Activated naive CD4-positive, alpha-beta T cell treated with anti-CD3 and anti-CD28 coated beads for 36 hours (primary cell): ENCODE measurements at regions of chr1 and their contacts with region 1.

Region 1: DNA sequence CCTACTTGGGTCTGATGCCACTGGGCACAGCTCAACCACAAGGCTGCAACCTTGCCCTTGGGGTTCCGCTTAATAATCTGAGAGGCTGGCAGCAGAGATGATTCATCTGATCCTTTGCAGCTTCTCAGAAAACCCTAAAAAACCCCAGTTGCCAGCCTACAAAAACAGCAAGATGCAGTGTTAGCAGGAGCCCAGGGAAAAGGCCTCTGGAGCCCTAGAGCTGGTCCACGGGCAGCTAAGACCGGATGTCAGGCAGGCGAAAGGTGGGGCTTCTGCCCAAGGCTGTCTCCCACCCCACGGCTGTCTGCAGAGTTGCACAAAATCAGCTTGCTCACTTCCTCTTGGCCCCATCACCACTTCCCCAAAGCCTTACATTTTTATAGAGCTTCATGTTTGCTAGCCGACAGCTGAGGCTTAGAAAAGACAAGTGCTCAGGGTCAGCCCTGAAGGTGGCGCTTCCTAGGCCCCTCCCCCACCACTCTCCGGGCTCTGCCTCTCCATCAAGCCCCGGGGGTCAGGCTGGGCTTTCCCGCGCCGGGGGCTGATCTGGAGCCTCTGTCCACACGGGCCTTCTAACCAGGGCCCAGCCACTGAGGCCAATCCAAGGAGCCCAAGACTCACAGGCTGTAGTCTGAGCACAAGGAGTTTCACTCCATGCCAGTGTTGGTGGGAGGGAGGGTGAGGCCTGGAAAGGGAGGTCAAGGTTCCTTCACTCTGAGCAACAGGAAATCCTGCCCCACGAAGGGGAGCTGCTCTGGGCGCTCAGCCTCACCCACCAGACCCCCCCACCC is 4.2 kb upstream of the ADORA3 start:
- DNase-seq: peak; percentile 77
- H3K4me3 Mint-ChIP-seq: peak overlapping the region; percentile 53
- H3K27ac Mint-ChIP-seq: peak overlapping the region; percentile 92
- H3K4me1 Mint-ChIP-seq: peaks cover 49% of the 10 kb centered on the region
- H3K27me3 Mint-ChIP-seq: no peaks in the 10 kb centered on the region

Region 2: DNA sequence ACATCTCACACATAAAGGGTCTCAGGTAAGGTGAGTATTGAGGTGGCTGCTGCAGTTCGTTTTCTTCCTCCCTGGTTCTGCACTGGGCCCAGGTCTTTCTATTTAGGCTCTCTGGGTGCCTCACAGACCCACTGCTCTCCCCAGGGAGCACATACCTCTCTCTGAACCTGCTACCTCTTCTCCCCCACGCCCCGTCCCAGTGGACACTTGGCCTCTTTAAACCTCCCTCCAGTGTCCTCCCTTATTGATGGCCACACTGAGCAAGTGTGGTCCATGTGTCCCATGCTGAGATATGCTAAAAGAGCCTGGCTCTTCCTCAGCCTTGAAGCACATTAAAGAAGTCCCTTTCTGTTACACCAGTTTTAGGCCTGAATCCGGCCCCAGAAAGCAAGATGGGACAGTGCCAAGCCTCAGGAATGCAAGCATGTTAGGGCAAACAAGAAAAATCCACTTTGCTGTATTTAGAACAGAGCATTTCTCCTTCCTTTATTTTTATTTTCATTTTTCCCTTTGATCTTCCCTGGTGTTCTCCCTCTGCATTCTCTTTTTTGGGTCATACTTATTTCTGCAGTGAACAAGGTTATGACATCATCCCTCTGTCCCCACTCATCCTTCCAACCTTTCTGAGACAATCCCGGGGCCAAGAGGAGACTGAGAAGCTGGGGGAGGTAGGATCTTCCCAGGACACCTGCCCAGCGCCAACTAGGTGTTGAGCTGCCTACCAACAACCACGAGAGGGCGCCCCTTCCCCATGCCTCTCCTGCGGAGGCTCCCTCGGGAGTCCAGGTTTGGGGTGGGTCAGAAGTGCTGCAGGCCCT is 285.1 kb before region 1 on chr1:
- CTCF ChIA-PET with region 1: no interaction called
- intact Hi-C with region 1: loop called (anchors 5 kb)
- DNase-seq: peak; percentile 90
- H3K4me3 Mint-ChIP-seq: peak overlapping the region; percentile 53
- H3K27ac Mint-ChIP-seq: peak overlapping the region; percentile 99
- H3K4me1 Mint-ChIP-seq: peaks cover 94% of the 10 kb centered on the region
- H3K27me3 Mint-ChIP-seq: no peaks in the 10 kb centered on the region

Region 3: GRCh38 chr1:111481387-111482221 is 26.0 kb before region 1 on chr1:
- CTCF ChIA-PET with region 1: interaction called, 41 read pairs
- intact Hi-C with region 1: loop called (anchors 1 kb)
- DNase-seq: peak; percentile 87
- H3K4me3 Mint-ChIP-seq: no peak overlapping the region
- H3K27ac Mint-ChIP-seq: no peak overlapping the region
- H3K4me1 Mint-ChIP-seq: peaks cover 29% of the 10 kb centered on the region
- H3K27me3 Mint-ChIP-seq: no peaks in the 10 kb centered on the region

Region 4: GRCh38 chr1:111592389-111593361 is 85.1 kb after region 1 on chr1:
- CTCF ChIA-PET with region 1: interaction called, 18 read pairs
- intact Hi-C with region 1: loop called (anchors 1 kb)
- DNase-seq: peak; percentile 96
- H3K4me3 Mint-ChIP-seq: peak overlapping the region; percentile 54
- H3K27ac Mint-ChIP-seq: peak overlapping the region; percentile 86
- H3K4me1 Mint-ChIP-seq: peaks cover 56% of the 10 kb centered on the region
- H3K27me3 Mint-ChIP-seq: no peaks in the 10 kb centered on the region

Region 5: GRCh38 chr1:111628153-111628552 is 120.5 kb after region 1 on chr1:
- CTCF ChIA-PET with region 1: interaction called, 14 read pairs
- intact Hi-C with region 1: no loop called
- DNase-seq: no peak
- H3K4me3 Mint-ChIP-seq: peak overlapping the region; percentile 39
- H3K27ac Mint-ChIP-seq: peak overlapping the region; percentile 69
- H3K4me1 Mint-ChIP-seq: peaks cover 88% of the 10 kb centered on the region
- H3K27me3 Mint-ChIP-seq: no peaks in the 10 kb centered on the region

Region 6: DNA sequence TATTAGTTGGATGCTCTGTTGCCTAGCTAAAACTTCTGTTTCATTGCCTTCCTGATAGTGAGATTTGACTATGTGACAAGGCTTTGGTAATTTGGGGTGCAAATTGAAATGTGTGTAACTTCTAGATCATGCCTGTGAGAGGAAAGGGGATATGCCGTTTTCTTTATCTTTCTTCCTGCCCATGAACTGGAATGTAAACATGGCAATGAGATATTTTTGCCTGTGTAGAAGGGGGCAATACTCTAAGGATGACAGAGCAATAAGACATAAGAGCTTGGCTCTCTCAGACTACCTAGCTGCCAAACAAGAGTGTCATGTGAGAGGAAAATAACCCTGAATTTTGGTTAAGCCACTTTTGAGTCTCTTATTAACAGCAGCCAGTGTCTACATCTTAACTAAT is 161.7 kb after region 1 on chr1:
- CTCF ChIA-PET with region 1: interaction called, 10 read pairs
- intact Hi-C with region 1: no loop called
- DNase-seq: no peak
- H3K4me3 Mint-ChIP-seq: no peak overlapping the region
- H3K27ac Mint-ChIP-seq: no peak overlapping the region
- H3K4me1 Mint-ChIP-seq: peaks cover 74% of the 10 kb centered on the region
- H3K27me3 Mint-ChIP-seq: no peaks in the 10 kb centered on the region

Region 7: GRCh38 chr1:111747282-111747734 is 239.7 kb after region 1 on chr1:
- CTCF ChIA-PET with region 1: interaction called, 77 read pairs
- intact Hi-C with region 1: loop called (anchors 1 kb)
- DNase-seq: peak; percentile 88
- H3K4me3 Mint-ChIP-seq: no peak overlapping the region
- H3K27ac Mint-ChIP-seq: no peak overlapping the region
- H3K4me1 Mint-ChIP-seq: no peaks in the 10 kb centered on the region
- H3K27me3 Mint-ChIP-seq: no peaks in the 10 kb centered on the region